ENCODE measurements at regions of chr3 and their contacts with region 1.

Region 1: GRCh38 chr3:24096271-24096670 is 151.2 kb downstream of the NR1D2 start:
- DNase-seq: no peak
- ATAC-seq: no peak
- H3K4me3 ChIP-seq: no peak overlapping the region
- H3K27ac ChIP-seq: no peak overlapping the region
- H3K4me1 ChIP-seq: no peaks in the 10 kb centered on the region
- H3K27me3 ChIP-seq: no peaks in the 10 kb centered on the region
- CTCF ChIP-seq: no peak

Region 2: DNA sequence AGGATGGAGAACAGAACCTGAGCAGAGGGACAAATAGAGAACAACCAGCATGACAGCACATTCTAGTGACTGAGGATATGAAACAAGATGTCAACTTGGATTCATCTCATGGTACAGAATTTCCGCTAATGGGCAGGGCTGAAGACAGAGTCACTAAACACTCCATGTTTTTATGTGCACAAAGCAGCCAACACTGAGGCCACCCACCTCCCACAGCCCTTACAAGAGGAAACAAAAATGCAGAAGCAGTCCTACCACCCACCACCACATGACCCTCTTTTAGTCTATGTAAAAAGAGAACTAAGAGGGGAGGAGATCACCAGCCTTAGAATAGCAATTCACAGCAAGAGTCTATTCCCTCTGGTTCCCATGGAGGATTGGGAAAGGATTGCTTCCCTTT is 1024.5 kb before region 1 on chr3:
- CTCF ChIA-PET with region 1: no interaction called
- POLR2A ChIA-PET with region 1: no interaction called
- in situ Hi-C with region 1: no loop called
- intact Hi-C with region 1: no loop called
- DNase-seq: no peak
- ATAC-seq: no peak
- H3K4me3 ChIP-seq: no peak overlapping the region
- H3K27ac ChIP-seq: no peak overlapping the region
- H3K4me1 ChIP-seq: no peaks in the 10 kb centered on the region
- H3K27me3 ChIP-seq: no peaks in the 10 kb centered on the region
- CTCF ChIP-seq: no peak

Region 3: DNA sequence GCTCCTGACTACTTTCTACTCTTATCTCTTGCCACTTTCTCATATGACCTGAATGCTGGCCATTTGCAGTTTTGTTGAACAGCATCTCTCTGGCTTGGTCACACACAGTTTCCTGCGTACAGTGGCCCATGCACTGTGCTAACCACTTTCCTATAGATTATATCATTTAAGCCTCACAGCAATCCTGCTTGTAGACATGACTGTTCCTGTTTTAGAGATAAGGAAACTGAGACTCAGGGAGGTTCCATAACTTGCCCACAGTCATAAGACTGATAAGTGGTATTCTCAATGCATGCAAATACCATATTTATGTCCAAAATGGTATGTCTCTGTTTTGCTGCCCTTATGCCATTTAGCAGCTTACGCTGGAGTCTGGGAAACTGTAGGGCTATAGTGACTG is 78.3 kb after region 1 on chr3:
- CTCF ChIA-PET with region 1: no interaction called
- POLR2A ChIA-PET with region 1: interaction called, 10 read pairs
- in situ Hi-C with region 1: no loop called
- intact Hi-C with region 1: no loop called
- DNase-seq: no peak
- ATAC-seq: no peak
- H3K4me3 ChIP-seq: no peak overlapping the region
- H3K27ac ChIP-seq: no peak overlapping the region
- H3K4me1 ChIP-seq: no peaks in the 10 kb centered on the region
- H3K27me3 ChIP-seq: no peaks in the 10 kb centered on the region
- CTCF ChIP-seq: no peak

Region 4: GRCh38 chr3:24981924-24982323 is 885.7 kb after region 1 on chr3:
- CTCF ChIA-PET with region 1: no interaction called
- POLR2A ChIA-PET with region 1: no interaction called
- in situ Hi-C with region 1: no loop called
- intact Hi-C with region 1: no loop called
- DNase-seq: no peak
- ATAC-seq: no peak
- H3K4me3 ChIP-seq: no peak overlapping the region
- H3K27ac ChIP-seq: no peak overlapping the region
- H3K4me1 ChIP-seq: no peaks in the 10 kb centered on the region
- H3K27me3 ChIP-seq: no peaks in the 10 kb centered on the region
- CTCF ChIP-seq: no peak

Region 5: GRCh38 chr3:25007974-25008658 is 911.8 kb after region 1 on chr3:
- CTCF ChIA-PET with region 1: no interaction called
- POLR2A ChIA-PET with region 1: no interaction called
- in situ Hi-C with region 1: no loop called
- intact Hi-C with region 1: no loop called
- DNase-seq: no peak
- ATAC-seq: no peak
- H3K4me3 ChIP-seq: no peak overlapping the region
- H3K27ac ChIP-seq: no peak overlapping the region
- H3K4me1 ChIP-seq: no peaks in the 10 kb centered on the region
- H3K27me3 ChIP-seq: no peaks in the 10 kb centered on the region
- CTCF ChIP-seq: no peak